CD4-positive, alpha-beta T cell (primary cell): ENCODE measurements at regions of chr7 and their contacts with region 1.

Region 1: GRCh38 chr7:2709553-2710285 is 21.7 kb downstream of the AMZ1 start:
- DNase-seq: peak; percentile 61 to 88 (median 77)
- ATAC-seq: peak; percentile 79
- H3K4me3 ChIP-seq: peak overlapping the region; percentile 48
- H3K4me3 Mint-ChIP-seq: peak overlapping the region; percentile 74
- H3K27ac ChIP-seq: peak overlapping the region in 1 of 2 donors; percentile 9
- H3K27ac Mint-ChIP-seq: peak overlapping the region; percentile 82
- H3K4me1 ChIP-seq: peaks cover 49% of the 10 kb centered on the region
- H3K4me1 Mint-ChIP-seq: peaks cover 33% of the 10 kb centered on the region
- H3K27me3 ChIP-seq: no peaks in the 10 kb centered on the region
- H3K27me3 Mint-ChIP-seq: no peaks in the 10 kb centered on the region
- CTCF ChIP-seq: peak; percentile 92

Region 2: GRCh38 chr7:2451171-2452073 is 258.3 kb before region 1 on chr7:
- CTCF ChIA-PET with region 1: interaction called, 13 read pairs
- POLR2A ChIA-PET with region 1: no interaction called
- intact Hi-C with region 1: loop called (anchors 1 kb)
- DNase-seq: peak; percentile 61 to 87 (median 72)
- ATAC-seq: peak; percentile 95
- H3K4me3 ChIP-seq: peak overlapping the region; percentile 46
- H3K4me3 Mint-ChIP-seq: no peak overlapping the region
- H3K27ac ChIP-seq: no peak overlapping the region
- H3K27ac Mint-ChIP-seq: no peak overlapping the region
- H3K4me1 ChIP-seq: peaks cover 12% of the 10 kb centered on the region
- H3K4me1 Mint-ChIP-seq: no peaks in the 10 kb centered on the region
- H3K27me3 ChIP-seq: peaks cover 0 to 9% of the 10 kb centered on the region in 2 experiments
- H3K27me3 Mint-ChIP-seq: no peaks in the 10 kb centered on the region
- CTCF ChIP-seq: peak; percentile 83

Region 3: GRCh38 chr7:2477447-2478398 is 232.0 kb before region 1 on chr7:
- CTCF ChIA-PET with region 1: no interaction called
- POLR2A ChIA-PET with region 1: no interaction called
- intact Hi-C with region 1: loop called in 1 of 2 experiments (anchors 1 kb)
- DNase-seq: peak; percentile 19 to 82 (median 58)
- ATAC-seq: peak; percentile 94
- H3K4me3 ChIP-seq: no peak overlapping the region
- H3K4me3 Mint-ChIP-seq: no peak overlapping the region
- H3K27ac ChIP-seq: no peak overlapping the region
- H3K27ac Mint-ChIP-seq: no peak overlapping the region
- H3K4me1 ChIP-seq: peaks cover 19% of the 10 kb centered on the region
- H3K4me1 Mint-ChIP-seq: no peaks in the 10 kb centered on the region
- H3K27me3 ChIP-seq: no peaks in the 10 kb centered on the region
- H3K27me3 Mint-ChIP-seq: no peaks in the 10 kb centered on the region
- CTCF ChIP-seq: peak; percentile 77

Region 4: GRCh38 chr7:2567679-2568278 is 141.9 kb before region 1 on chr7:
- CTCF ChIA-PET with region 1: no interaction called
- POLR2A ChIA-PET with region 1: no interaction called
- intact Hi-C with region 1: loop called in 1 of 2 experiments (anchors 10 kb)
- DNase-seq: peak in 1 of 14 experiments; percentile 38
- ATAC-seq: no peak
- H3K4me3 ChIP-seq: no peak overlapping the region
- H3K4me3 Mint-ChIP-seq: no peak overlapping the region
- H3K27ac ChIP-seq: no peak overlapping the region
- H3K27ac Mint-ChIP-seq: no peak overlapping the region
- H3K4me1 ChIP-seq: peaks cover 13% of the 10 kb centered on the region
- H3K4me1 Mint-ChIP-seq: peaks cover 22% of the 10 kb centered on the region
- H3K27me3 ChIP-seq: no peaks in the 10 kb centered on the region
- H3K27me3 Mint-ChIP-seq: no peaks in the 10 kb centered on the region
- CTCF ChIP-seq: no peak

Region 5: GRCh38 chr7:2670720-2671391 is 38.9 kb before region 1 on chr7:
- CTCF ChIA-PET with region 1: interaction called, 47 read pairs
- POLR2A ChIA-PET with region 1: interaction called, 9 read pairs
- intact Hi-C with region 1: loop called (anchors 1 kb)
- DNase-seq: peak; percentile 48 to 82 (median 62)
- ATAC-seq: peak; percentile 91
- H3K4me3 ChIP-seq: no peak overlapping the region
- H3K4me3 Mint-ChIP-seq: no peak overlapping the region
- H3K27ac ChIP-seq: no peak overlapping the region
- H3K27ac Mint-ChIP-seq: no peak overlapping the region
- H3K4me1 ChIP-seq: peaks cover 7% of the 10 kb centered on the region
- H3K4me1 Mint-ChIP-seq: peaks cover 7% of the 10 kb centered on the region
- H3K27me3 ChIP-seq: peaks cover 3 to 7% of the 10 kb centered on the region in 2 experiments
- H3K27me3 Mint-ChIP-seq: peaks cover 12% of the 10 kb centered on the region
- CTCF ChIP-seq: peak; percentile 85

Region 6: GRCh38 chr7:2698581-2699288 is 11.0 kb before region 1 on chr7:
- CTCF ChIA-PET with region 1: interaction called, 19 read pairs
- POLR2A ChIA-PET with region 1: interaction called, 29 read pairs
- intact Hi-C with region 1: no loop called
- DNase-seq: peak; percentile 36 to 83 (median 64)
- ATAC-seq: peak; percentile 93
- H3K4me3 ChIP-seq: peak overlapping the region; percentile 21
- H3K4me3 Mint-ChIP-seq: peak overlapping the region; percentile 77
- H3K27ac ChIP-seq: no peak overlapping the region
- H3K27ac Mint-ChIP-seq: peak overlapping the region; percentile 63
- H3K4me1 ChIP-seq: peaks cover 21% of the 10 kb centered on the region
- H3K4me1 Mint-ChIP-seq: peaks cover 22% of the 10 kb centered on the region
- H3K27me3 ChIP-seq: no peaks in the 10 kb centered on the region
- H3K27me3 Mint-ChIP-seq: no peaks in the 10 kb centered on the region
- CTCF ChIP-seq: no peak

Region 7: GRCh38 chr7:3294432-3295100 is 584.8 kb after region 1 on chr7:
- CTCF ChIA-PET with region 1: no interaction called
- POLR2A ChIA-PET with region 1: no interaction called
- intact Hi-C with region 1: no loop called
- DNase-seq: no peak
- ATAC-seq: no peak
- H3K4me3 ChIP-seq: no peak overlapping the region
- H3K4me3 Mint-ChIP-seq: no peak overlapping the region
- H3K27ac ChIP-seq: no peak overlapping the region
- H3K27ac Mint-ChIP-seq: no peak overlapping the region
- H3K4me1 ChIP-seq: no peaks in the 10 kb centered on the region
- H3K4me1 Mint-ChIP-seq: no peaks in the 10 kb centered on the region
- H3K27me3 ChIP-seq: peaks cover 6 to 7% of the 10 kb centered on the region in 2 experiments
- H3K27me3 Mint-ChIP-seq: peaks cover 35% of the 10 kb centered on the region
- CTCF ChIP-seq: no peak